PC-3 (cell line): ENCODE measurements at regions of chr14 and their contacts with region 1.

Region 1: DNA sequence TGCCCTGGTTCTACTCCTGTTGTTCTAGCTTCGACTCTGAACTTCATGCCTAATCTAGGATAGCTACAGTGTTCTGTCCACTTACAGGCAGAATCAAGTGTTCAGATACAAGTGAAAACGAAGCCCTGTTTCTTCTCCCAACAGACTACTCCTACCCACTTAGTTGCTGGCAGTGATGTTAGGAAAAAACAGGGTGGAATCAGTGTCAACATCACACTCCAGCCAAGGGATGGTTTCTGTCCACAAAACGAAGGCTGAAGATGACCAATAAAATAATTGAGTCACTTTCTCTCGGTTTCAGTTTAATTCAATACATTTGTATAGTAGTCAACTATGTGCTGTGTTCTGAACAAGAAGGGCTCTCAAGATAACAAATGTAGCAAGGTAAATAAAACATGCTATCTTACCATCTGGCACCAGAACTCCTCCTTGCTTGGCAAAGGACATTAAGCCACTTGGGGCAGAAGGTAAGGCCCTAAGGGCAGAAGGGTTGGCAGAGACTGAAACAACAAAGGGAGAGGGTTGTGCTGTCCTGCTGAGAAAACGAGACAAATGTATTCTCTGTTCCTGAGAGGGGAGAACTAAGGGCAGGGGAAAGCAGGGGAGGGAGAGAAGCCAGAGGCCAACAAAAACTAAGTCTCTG is 393.6 kb downstream of the DPF3 start:
- DNase-seq: peak; percentile 61
- ATAC-seq: peak; percentile 85
- H3K4me3 ChIP-seq: no peak overlapping the region
- H3K27ac ChIP-seq: 0 out of 2 replicates have a peak overlapping the region, but pooled peaks have one; percentile 2
- H3K4me1 ChIP-seq: peaks cover 21% of the 10 kb centered on the region; the same call in 1 of the 2 replicates
- H3K27me3 ChIP-seq: peaks cover 22% of the 10 kb centered on the region
- CTCF ChIP-seq: no peak

Region 2: DNA sequence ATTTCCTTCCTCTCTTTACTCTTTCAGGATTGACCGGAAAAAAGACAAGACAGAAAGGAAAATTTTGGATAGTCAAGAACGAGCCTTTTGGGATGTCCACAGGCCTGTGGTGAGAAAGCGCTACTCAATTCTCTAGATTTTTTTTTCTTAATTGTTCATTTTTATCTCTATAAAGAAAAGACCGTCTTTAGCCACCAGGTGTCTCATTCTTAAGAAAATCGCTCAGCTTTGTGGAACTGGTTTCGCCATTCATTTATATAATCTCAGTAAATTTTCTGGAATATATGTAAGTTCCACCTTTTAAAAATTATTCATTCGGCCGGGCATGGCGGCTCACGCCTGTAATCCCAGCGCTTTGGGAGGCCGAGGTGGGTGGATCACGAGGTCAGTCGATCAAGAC is 27.5 kb before region 1 on chr14:
- CTCF ChIA-PET with region 1: no interaction called
- POLR2A ChIA-PET with region 1: no interaction called
- intact Hi-C with region 1: loop called (anchors 2 kb)
- DNase-seq: peak; percentile 45
- ATAC-seq: peak; percentile 53; the same call in 1 of the 2 replicates
- H3K4me3 ChIP-seq: no peak overlapping the region
- H3K27ac ChIP-seq: no peak overlapping the region
- H3K4me1 ChIP-seq: peaks cover 5% of the 10 kb centered on the region; the same call in 1 of the 2 replicates
- H3K27me3 ChIP-seq: peaks cover 64% of the 10 kb centered on the region
- CTCF ChIP-seq: peak; percentile 60